ENCODE measurements at regions of chr1 and their contacts with region 1.

Region 1: DNA sequence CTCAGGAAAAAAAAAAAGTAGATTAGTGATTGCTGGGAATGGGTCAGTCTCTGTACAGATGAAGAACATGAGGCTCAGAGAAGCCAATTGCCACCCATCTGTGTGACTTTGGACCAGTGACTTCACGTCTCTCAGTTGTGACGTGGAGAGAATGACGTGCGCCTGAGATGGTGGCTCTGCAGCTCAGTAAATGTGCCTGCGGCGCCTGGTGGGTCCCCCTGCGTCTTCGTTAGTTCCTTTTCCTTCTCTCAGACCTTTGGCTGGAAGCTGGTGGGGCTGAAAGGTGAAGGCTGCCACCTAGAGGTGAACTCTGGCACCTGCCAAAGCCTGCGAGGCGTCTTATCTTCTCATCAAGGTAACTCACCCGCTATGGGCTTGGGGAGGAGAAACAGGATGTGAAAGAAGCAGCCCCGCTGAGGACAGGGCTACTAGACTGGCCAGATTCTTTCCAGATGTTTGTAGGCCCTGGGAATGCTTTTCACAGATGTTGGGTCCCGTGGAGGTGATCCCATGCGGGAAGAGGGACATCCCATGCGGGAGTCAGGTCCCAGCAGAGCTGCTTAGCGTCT is 8.7 kb upstream of the E2F2 start:
- DNase-seq: peak; percentile 73 to 93 (median 91)
- ATAC-seq: peak; percentile 98
- H3K4me3 ChIP-seq: no peak overlapping the region
- H3K4me3 Mint-ChIP-seq: peak overlapping the region in 9 of 10 donors; percentile 35 to 66 (median 53)
- H3K27ac ChIP-seq: no peak overlapping the region
- H3K27ac Mint-ChIP-seq: peak overlapping the region; percentile 43 to 85 (median 73)
- H3K4me1 ChIP-seq: peaks cover 10 to 11% of the 10 kb centered on the region in 2 donors
- H3K4me1 Mint-ChIP-seq: peaks cover 3 to 23% (median 17%) of the 10 kb centered on the region in 7 donors
- H3K27me3 ChIP-seq: no peaks in the 10 kb centered on the region
- H3K27me3 Mint-ChIP-seq: no peaks in the 10 kb centered on the region

Region 2: DNA sequence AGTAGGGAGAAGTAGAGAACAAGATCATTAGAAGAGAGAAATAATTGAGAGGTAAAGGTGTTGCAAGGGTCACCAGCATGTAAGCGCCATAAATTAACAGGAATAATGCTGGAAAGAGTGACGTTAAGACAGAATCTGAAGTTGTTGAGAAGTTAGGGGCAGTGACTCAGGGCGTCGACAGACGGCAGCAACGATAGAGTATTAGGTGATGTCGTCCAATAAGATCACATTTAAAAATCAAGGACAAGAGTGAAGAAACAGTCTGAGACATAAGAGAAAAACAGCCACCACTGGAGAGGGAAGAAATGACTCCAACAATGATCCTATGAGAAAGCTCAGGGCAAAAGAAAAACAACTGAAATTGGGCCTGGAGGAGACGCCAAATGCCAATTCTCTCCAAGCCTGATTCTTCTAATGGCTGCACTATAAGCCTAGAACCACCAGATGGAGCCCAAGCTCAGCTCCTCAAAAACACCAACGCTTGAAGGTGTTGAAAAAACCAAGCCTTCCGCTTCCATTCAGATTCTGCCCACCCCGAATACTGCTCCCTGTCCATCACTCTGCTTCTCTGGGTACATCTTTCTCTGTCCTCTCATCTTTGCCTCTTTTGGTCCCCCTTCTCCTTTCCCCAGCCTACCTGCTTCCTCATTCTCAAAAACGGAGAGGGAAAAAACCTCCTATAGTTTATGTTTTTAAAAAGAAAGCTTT is 441.2 kb before region 1 on chr1:
- CTCF ChIA-PET with region 1: no interaction called
- POLR2A ChIA-PET with region 1: no interaction called
- intact Hi-C with region 1: loop called in 1 of 2 experiments (anchors 1 kb)
- DNase-seq: peak; percentile 28 to 71 (median 60)
- ATAC-seq: peak; percentile 79
- H3K4me3 ChIP-seq: no peak overlapping the region
- H3K4me3 Mint-ChIP-seq: peak overlapping the region in 5 of 10 donors; percentile 8 to 63 (median 29)
- H3K27ac ChIP-seq: no peak overlapping the region
- H3K27ac Mint-ChIP-seq: peak overlapping the region in 2 of 9 donors; percentile 14 to 36
- H3K4me1 ChIP-seq: peaks cover 20 to 30% of the 10 kb centered on the region in 2 donors
- H3K4me1 Mint-ChIP-seq: peaks cover 30 to 49% (median 34%) of the 10 kb centered on the region in 7 donors
- H3K27me3 ChIP-seq: no peaks in the 10 kb centered on the region
- H3K27me3 Mint-ChIP-seq: no peaks in the 10 kb centered on the region

Region 3: DNA sequence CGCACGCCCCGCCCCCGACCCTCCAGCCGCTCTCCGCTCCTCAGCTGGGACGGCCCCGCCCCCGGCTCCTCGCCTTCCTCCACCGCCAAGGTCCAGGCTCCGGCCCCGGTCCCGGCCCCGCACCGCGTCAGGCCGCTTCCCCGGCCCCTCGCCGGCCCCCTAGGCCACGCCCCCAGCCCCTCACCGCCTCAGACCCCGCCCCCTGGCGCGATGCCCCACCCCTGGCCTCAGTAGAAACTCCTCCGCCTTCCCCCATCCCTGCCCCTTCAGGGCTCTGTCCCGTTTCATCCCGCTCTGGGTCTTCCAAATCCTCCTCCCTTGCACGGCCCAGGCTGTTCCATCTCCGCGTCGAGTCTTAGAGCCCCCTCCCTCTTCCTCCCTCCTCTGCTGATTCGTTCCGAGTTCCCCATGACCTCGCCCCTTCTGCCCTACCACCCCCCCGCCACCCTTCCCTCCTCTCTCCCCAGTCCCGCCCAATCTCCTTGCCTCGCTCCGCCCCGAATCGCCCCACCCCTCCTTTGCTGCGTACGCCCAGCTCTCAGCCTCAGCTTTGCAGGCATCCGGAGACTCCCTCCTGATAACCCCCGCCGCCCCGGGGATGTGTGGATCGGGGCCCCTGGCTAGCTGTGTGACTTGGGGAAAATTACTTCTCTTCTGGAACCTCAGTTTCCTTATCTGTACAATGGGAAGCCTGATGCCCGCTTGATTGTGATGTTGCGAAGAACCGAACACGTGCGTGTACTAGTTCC is 55.4 kb before region 1 on chr1:
- CTCF ChIA-PET with region 1: interaction called, 6 read pairs
- POLR2A ChIA-PET with region 1: no interaction called
- intact Hi-C with region 1: loop called in 1 of 2 experiments (anchors 1 kb)
- DNase-seq: peak; percentile 76 to 92 (median 90)
- ATAC-seq: peak; percentile 94
- H3K4me3 ChIP-seq: peak overlapping the region; percentile 67
- H3K4me3 Mint-ChIP-seq: peak overlapping the region; percentile 74 to 97 (median 88)
- H3K27ac ChIP-seq: peak overlapping the region; percentile 63
- H3K27ac Mint-ChIP-seq: peak overlapping the region; percentile 65 to 83 (median 76)
- H3K4me1 ChIP-seq: peaks cover 13% of the 10 kb centered on the region in 2 donors
- H3K4me1 Mint-ChIP-seq: peaks cover 12 to 20% (median 15%) of the 10 kb centered on the region in 7 donors
- H3K27me3 ChIP-seq: no peaks in the 10 kb centered on the region
- H3K27me3 Mint-ChIP-seq: peaks cover 0 to 73% (median 13%) of the 10 kb centered on the region in 5 donors

Region 4: DNA sequence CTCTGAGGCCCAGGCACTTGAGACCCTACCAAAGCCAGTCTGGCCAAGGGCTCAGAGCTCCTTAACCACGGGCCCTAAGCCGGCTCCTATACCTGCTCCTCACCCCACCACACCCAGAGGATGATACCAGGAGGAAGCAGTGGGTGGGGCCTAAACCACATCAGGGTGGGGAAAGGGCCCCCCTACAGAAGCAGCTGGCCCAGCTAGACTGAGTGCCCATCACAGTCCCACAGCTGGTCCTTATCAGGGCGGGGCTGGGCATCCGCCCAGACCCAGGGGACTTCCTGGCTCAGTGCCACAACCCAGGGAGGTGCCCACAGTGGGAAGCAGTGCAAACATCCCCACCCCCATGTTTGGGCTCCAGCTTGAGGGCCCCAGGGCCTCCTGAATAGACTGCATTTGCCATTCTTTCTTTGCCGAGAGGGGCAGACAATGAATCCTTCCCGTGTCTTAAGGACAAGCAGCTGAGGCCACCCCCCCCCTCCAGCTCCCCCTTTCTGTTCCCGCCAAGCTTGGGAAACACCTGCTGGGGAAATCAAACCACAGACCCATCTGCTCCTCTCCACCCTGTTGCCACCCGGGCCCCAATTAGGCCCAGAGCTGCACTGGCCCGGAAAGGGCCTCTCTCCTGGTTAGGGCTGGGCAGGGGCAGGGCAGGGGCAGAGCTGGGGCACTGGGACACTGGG is 14.9 kb before region 1 on chr1:
- CTCF ChIA-PET with region 1: interaction called, 13 read pairs
- POLR2A ChIA-PET with region 1: interaction called, 6 read pairs
- intact Hi-C with region 1: loop called in 1 of 2 experiments (anchors 1 kb)
- DNase-seq: peak in 2 of 9 donors; percentile 16 to 35
- ATAC-seq: peak; percentile 26
- H3K4me3 ChIP-seq: peak overlapping the region; percentile 9
- H3K4me3 Mint-ChIP-seq: peak overlapping the region; percentile 53 to 96 (median 70)
- H3K27ac ChIP-seq: peak overlapping the region; percentile 8
- H3K27ac Mint-ChIP-seq: peak overlapping the region in 4 of 9 donors; percentile 38 to 96 (median 58)
- H3K4me1 ChIP-seq: peaks cover 60% of the 10 kb centered on the region in 2 donors
- H3K4me1 Mint-ChIP-seq: peaks cover 39 to 76% (median 63%) of the 10 kb centered on the region in 7 donors
- H3K27me3 ChIP-seq: no peaks in the 10 kb centered on the region
- H3K27me3 Mint-ChIP-seq: no peaks in the 10 kb centered on the region

Region 5: DNA sequence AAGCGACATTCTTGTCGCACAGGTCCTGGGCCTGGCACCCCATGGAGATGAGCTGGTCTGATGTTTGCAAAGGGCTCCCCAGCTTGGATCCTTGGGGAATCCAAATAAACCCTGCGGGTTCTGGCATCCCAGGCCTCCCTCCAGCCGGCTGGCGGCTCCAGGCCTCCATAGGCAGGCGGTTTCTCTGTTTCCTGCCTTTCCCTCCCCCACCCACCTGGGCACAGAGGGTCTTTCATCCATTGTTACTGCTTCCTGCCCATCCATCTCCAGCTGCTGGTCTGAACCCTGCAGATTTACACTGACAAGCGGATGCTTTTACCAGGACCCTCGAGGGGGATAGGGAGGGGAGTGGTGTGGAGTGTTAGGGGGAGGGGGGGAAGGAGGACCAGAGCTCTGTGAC is 58.6 kb after region 1 on chr1:
- CTCF ChIA-PET with region 1: interaction called, 21 read pairs
- POLR2A ChIA-PET with region 1: interaction called, 5 read pairs
- intact Hi-C with region 1: loop called in 1 of 2 experiments (anchors 2 kb)
- DNase-seq: no peak
- ATAC-seq: no peak
- H3K4me3 ChIP-seq: no peak overlapping the region
- H3K4me3 Mint-ChIP-seq: peak overlapping the region in 5 of 10 donors; percentile 6 to 88 (median 69)
- H3K27ac ChIP-seq: peak overlapping the region; percentile 40
- H3K27ac Mint-ChIP-seq: peak overlapping the region in 6 of 9 donors; percentile 3 to 84 (median 72)
- H3K4me1 ChIP-seq: peaks cover 73 to 92% of the 10 kb centered on the region in 2 donors
- H3K4me1 Mint-ChIP-seq: peaks cover 50 to 97% (median 85%) of the 10 kb centered on the region in 7 donors
- H3K27me3 ChIP-seq: no peaks in the 10 kb centered on the region
- H3K27me3 Mint-ChIP-seq: no peaks in the 10 kb centered on the region

Region 6: DNA sequence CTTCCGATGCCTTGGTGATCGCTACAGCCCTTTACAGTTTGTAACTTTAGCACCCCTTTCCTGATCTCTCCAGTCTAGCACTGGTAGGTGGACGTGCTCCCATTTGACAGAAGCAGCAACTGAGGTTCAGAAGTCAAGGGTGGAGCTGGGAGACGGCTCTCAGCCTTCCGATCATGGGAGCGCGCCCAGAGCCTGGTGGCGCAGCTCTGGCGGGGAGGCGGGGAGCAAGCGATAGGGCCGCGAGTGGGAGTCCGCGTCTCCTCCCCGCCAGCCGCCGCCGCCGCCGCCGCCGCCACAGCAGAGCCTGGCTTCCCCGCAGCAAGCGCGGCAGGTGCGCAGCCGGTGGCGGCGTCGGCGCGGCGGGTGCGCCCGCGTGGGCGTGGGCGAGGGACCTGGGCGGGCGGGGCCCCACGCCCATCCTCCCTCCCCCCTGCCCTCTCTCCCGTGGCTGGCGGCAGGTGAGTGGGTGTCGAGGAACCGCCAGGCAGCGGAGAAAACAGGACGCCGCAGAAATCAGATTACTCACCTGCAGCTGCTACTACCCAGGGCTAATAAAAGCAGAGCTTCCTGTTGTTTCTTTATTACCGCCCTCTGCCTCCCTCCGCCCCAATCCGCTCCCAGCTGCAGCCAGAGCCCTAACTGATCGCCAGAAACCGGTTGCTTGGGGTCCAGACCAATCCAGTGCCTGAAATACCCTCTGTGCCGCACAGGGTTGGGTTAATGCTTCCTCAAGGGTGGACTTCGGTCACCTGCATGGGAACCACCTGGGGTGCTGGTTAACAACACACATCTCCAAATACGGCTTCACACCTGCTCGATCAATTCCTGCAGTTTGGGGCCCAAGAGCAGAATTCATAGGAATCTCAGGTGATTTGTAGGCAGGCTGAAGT is 79.8 kb after region 1 on chr1:
- CTCF ChIA-PET with region 1: interaction called, 643 read pairs
- POLR2A ChIA-PET with region 1: interaction called, 559 read pairs
- intact Hi-C with region 1: no loop called
- DNase-seq: peak; percentile 58 to 88 (median 84)
- ATAC-seq: peak; percentile 93
- H3K4me3 ChIP-seq: peak overlapping the region; percentile 65
- H3K4me3 Mint-ChIP-seq: peak overlapping the region; percentile 63 to 85 (median 78)
- H3K27ac ChIP-seq: peak overlapping the region; percentile 81
- H3K27ac Mint-ChIP-seq: peak overlapping the region; percentile 84 to 99 (median 97)
- H3K4me1 ChIP-seq: peaks cover 45 to 79% of the 10 kb centered on the region in 2 donors
- H3K4me1 Mint-ChIP-seq: peaks cover 68 to 97% (median 90%) of the 10 kb centered on the region in 7 donors
- H3K27me3 ChIP-seq: no peaks in the 10 kb centered on the region
- H3K27me3 Mint-ChIP-seq: peaks cover 0 to 11% (median 0%) of the 10 kb centered on the region in 5 donors